Activated B cell treated with CpG ODN at 0.5 μM for 24 hours (primary cell): ENCODE measurements at regions of chr12 and their contacts with region 1.

Region 1: GRCh38 chr12:47990351-47991105 is 13.7 kb downstream of the COL2A1 start:
- DNase-seq: peak; percentile 29
- ATAC-seq: peak; percentile 99
- H3K4me3 Mint-ChIP-seq: no peak overlapping the region
- H3K27ac Mint-ChIP-seq: peak overlapping the region; percentile 78
- H3K4me1 Mint-ChIP-seq: peaks cover 34% of the 10 kb centered on the region
- H3K27me3 Mint-ChIP-seq: peaks cover 17% of the 10 kb centered on the region
- CTCF ChIP-seq: no peak

Region 2: DNA sequence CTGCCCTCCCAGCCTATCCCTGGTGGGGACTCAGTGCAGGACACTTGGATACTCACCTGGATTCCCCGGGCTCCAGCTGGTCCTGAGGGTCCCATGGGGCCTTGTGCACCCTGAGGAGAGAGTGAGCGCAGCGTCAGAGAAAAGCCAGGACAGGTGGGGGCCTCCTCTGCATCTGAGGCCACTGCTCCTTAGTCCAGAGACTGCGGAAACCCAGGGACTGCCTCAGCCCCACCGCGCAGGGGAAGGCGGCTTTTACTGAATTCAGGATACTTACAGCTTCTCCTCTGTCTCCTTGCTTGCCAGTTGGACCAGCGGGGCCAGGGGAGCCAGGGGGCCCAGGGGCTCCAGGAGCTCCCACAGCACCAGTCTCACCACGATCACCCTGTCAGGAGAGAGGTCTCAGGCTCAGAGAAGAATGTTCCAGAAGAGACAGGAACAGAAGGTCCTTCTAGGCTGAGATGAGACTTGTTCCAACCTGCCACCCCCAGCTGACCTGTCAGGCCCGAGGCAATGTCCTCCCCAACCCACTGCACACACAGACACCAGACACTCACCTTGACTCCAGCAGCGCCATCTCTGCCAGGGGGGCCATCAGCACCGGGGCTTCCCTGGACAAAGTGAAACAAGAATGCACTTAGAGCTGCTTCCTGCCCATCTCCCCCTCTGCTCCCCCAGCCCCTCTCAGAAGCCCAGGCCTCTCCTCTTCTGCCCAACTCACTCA is 13.3 kb before region 1 on chr12:
- CTCF ChIA-PET with region 1: no interaction called
- POLR2A ChIA-PET with region 1: no interaction called
- intact Hi-C with region 1: no loop called
- DNase-seq: no peak
- ATAC-seq: no peak
- H3K4me3 Mint-ChIP-seq: no peak overlapping the region
- H3K27ac Mint-ChIP-seq: no peak overlapping the region
- H3K4me1 Mint-ChIP-seq: no peaks in the 10 kb centered on the region
- H3K27me3 Mint-ChIP-seq: no peaks in the 10 kb centered on the region
- CTCF ChIP-seq: no peak

Region 3: GRCh38 chr12:48001505-48002413 is 11.2 kb after region 1 on chr12:
- CTCF ChIA-PET with region 1: no interaction called
- POLR2A ChIA-PET with region 1: interaction called, 4 read pairs
- intact Hi-C with region 1: loop called (anchors 1 kb)
- DNase-seq: no peak
- ATAC-seq: peak; percentile 21
- H3K4me3 Mint-ChIP-seq: peak overlapping the region; percentile 71
- H3K27ac Mint-ChIP-seq: no peak overlapping the region
- H3K4me1 Mint-ChIP-seq: peaks cover 36% of the 10 kb centered on the region
- H3K27me3 Mint-ChIP-seq: peaks cover 80% of the 10 kb centered on the region
- CTCF ChIP-seq: no peak